GM12878 (cell line): ENCODE measurements at regions of chr5 and their contacts with region 1.

Region 1: DNA sequence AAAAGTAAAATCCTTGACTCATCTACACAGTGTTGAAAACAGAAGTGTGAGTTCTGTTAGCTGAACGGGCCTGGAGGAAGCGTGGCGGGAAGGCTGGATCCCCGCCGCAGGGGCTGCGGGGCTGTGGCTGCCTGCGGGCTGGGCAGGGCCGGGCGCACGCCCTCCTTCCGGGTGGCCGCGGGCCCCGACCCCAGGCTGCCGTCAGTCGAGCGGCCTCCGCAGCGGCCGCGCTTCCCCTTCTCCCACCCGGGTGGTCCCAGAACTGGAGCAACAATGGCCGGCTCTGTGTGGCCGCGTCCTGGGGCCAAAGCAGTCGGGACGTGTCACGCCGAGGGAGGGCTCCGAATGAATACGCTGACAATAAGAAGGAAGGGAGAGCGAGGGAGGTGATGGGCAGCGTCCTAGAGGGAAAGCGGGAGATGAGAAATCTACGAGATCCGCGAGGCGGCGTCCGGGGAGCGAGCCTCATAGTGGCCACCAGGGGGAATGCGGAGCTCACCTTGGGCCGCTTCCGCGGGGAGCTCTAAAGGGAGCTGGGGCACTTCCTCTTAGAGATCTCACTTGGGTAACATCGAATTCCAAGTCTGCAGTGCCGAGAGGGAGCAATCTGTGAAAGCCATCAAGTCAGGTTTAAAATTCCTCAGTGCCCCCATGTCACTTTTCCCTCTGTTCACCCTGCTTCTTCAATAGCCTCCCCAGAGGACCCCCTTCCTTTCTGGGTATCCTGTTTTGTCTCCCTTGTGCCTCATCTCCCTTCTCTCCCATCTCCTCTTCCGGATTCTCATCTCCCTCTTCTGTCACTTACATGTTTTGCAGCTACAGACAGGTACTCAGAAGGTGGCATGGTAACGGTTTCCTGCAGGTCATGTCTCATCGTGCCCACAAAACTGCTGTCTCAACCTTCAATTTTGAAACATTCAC is 83.9 kb downstream of the SLC1A3 start:
- DNase-seq: peak; percentile 42
- ATAC-seq: peak; percentile 84
- H3K4me3 ChIP-seq: peak overlapping the region; percentile 83
- H3K27ac ChIP-seq: peak overlapping the region; percentile 55
- H3K4me1 ChIP-seq: peaks cover 19% of the 10 kb centered on the region
- H3K27me3 ChIP-seq: no peaks in the 10 kb centered on the region
- CTCF ChIP-seq: peak; percentile 89 to 95 (median 90)
- EP300 ChIP-seq: no peak
- POLR2A ChIP-seq: peak; percentile 68
- RAD21 ChIP-seq: peak; percentile 53

Region 2: GRCh38 chr5:35598707-35599370 is 1091.5 kb before region 1 on chr5:
- CTCF ChIA-PET with region 1: no interaction called
- POLR2A ChIA-PET with region 1: no interaction called
- RAD21 ChIA-PET with region 1: no interaction called
- SMC1A ChIA-PET with region 1: no interaction called
- in situ Hi-C with region 1: no loop called
- intact Hi-C with region 1: no loop called
- DNase-seq: no peak
- ATAC-seq: peak; percentile 87
- H3K4me3 ChIP-seq: no peak overlapping the region
- H3K27ac ChIP-seq: no peak overlapping the region
- H3K4me1 ChIP-seq: no peaks in the 10 kb centered on the region
- H3K27me3 ChIP-seq: no peaks in the 10 kb centered on the region
- CTCF ChIP-seq: peak in 2 of 3 experiments; percentile 21 to 41; a peak in 2 of 6 replicates
- EP300 ChIP-seq: no peak
- POLR2A ChIP-seq: no peak
- RAD21 ChIP-seq: peak; percentile 29; the same call in 1 of the 2 replicates

Region 3: GRCh38 chr5:36177715-36178523 is 512.4 kb before region 1 on chr5:
- CTCF ChIA-PET with region 1: interaction called, 5 read pairs
- POLR2A ChIA-PET with region 1: no interaction called
- RAD21 ChIA-PET with region 1: interaction called, 3 read pairs
- SMC1A ChIA-PET with region 1: interaction called, 3 read pairs
- in situ Hi-C with region 1: loop called (anchors 10 kb)
- intact Hi-C with region 1: loop called (anchors 2 kb)
- DNase-seq: no peak
- ATAC-seq: peak; percentile 79
- H3K4me3 ChIP-seq: peak overlapping the region; percentile 1; the same call in 1 of the 2 replicates
- H3K27ac ChIP-seq: peak overlapping the region; percentile 50; the same call in 1 of the 2 replicates
- H3K4me1 ChIP-seq: peaks cover 14% of the 10 kb centered on the region
- H3K27me3 ChIP-seq: no peaks in the 10 kb centered on the region
- CTCF ChIP-seq: peak; percentile 13 to 37 (median 37); a peak in 4 of 6 replicates
- EP300 ChIP-seq: no peak
- POLR2A ChIP-seq: no peak
- RAD21 ChIP-seq: peak; percentile 54

Region 4: DNA sequence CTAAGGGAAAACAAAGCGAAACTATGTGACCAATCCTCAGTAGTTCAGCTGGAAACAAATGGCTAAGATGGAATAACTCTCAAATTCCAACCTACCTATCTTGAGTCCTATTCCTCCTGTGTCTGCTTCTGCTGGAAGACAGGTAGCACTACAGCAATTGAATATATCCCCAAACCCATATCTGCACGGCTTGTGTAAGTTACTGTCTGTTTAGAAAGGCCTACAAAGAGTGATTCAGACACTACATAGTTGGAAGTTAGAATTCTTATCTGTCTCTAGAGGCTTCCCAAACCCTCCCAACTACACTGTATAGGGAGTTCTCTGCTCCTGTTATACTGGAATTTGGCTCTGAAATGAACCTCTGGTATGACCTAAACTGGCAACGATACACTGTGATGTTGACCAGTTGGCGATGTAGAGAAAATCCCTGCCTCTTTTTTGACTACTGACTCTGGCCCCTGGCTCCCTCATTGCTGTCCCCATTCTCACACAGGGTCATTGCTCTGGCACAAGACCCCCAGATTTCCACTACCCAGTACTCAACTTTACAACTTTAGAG is 426.0 kb before region 1 on chr5:
- CTCF ChIA-PET with region 1: interaction called, 14 read pairs
- POLR2A ChIA-PET with region 1: no interaction called
- RAD21 ChIA-PET with region 1: interaction called, 5 read pairs
- SMC1A ChIA-PET with region 1: interaction called, 6 read pairs
- in situ Hi-C with region 1: no loop called
- intact Hi-C with region 1: loop called (anchors 1 kb)
- DNase-seq: no peak
- ATAC-seq: no peak
- H3K4me3 ChIP-seq: no peak overlapping the region
- H3K27ac ChIP-seq: no peak overlapping the region
- H3K4me1 ChIP-seq: no peaks in the 10 kb centered on the region
- H3K27me3 ChIP-seq: no peaks in the 10 kb centered on the region
- CTCF ChIP-seq: no peak
- EP300 ChIP-seq: no peak
- POLR2A ChIP-seq: no peak
- RAD21 ChIP-seq: no peak

Region 5: GRCh38 chr5:36507332-36507952 is 182.9 kb before region 1 on chr5:
- CTCF ChIA-PET with region 1: interaction called, 44 read pairs
- POLR2A ChIA-PET with region 1: no interaction called
- RAD21 ChIA-PET with region 1: interaction called, 6 read pairs
- SMC1A ChIA-PET with region 1: interaction called, 10 read pairs
- in situ Hi-C with region 1: no loop called
- intact Hi-C with region 1: loop called (anchors 1 kb)
- DNase-seq: peak; percentile 3
- ATAC-seq: peak; percentile 90
- H3K4me3 ChIP-seq: no peak overlapping the region
- H3K27ac ChIP-seq: no peak overlapping the region
- H3K4me1 ChIP-seq: no peaks in the 10 kb centered on the region
- H3K27me3 ChIP-seq: no peaks in the 10 kb centered on the region
- CTCF ChIP-seq: peak; percentile 69 to 77 (median 71)
- EP300 ChIP-seq: no peak
- POLR2A ChIP-seq: no peak
- RAD21 ChIP-seq: peak; percentile 80

Region 6: GRCh38 chr5:36602711-36603321 is 87.5 kb before region 1 on chr5:
- CTCF ChIA-PET with region 1: no interaction called
- POLR2A ChIA-PET with region 1: no interaction called
- RAD21 ChIA-PET with region 1: no interaction called
- SMC1A ChIA-PET with region 1: no interaction called
- in situ Hi-C with region 1: no loop called
- intact Hi-C with region 1: loop called (anchors 2 kb)
- DNase-seq: no peak
- ATAC-seq: peak; percentile 44
- H3K4me3 ChIP-seq: no peak overlapping the region
- H3K27ac ChIP-seq: no peak overlapping the region
- H3K4me1 ChIP-seq: no peaks in the 10 kb centered on the region
- H3K27me3 ChIP-seq: no peaks in the 10 kb centered on the region
- CTCF ChIP-seq: peak; percentile 18 to 32 (median 20); a peak in 3 of 6 replicates
- EP300 ChIP-seq: no peak
- POLR2A ChIP-seq: no peak
- RAD21 ChIP-seq: peak; percentile 53; the same call in 1 of the 2 replicates

Region 7: DNA sequence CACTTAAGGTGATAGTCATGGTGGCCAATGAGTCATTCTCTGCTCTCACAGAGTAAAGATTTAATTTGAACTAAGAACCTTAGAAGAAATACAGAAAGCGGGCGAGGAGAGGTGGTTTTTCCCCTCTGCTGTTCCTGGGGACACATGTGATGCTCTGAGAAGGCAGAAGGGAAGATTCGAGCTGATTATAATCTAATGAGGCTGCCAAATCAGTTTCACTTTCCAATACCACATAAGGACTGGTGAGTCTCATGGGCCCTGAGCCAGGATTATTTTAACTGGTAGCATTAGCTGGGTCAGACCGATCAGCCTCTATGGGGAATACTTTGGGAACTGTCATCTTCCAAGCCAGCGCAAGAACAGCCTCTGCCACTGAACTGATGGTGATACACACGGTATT is 32.6 kb after region 1 on chr5:
- CTCF ChIA-PET with region 1: interaction called, 202 read pairs
- POLR2A ChIA-PET with region 1: interaction called, 18 read pairs
- RAD21 ChIA-PET with region 1: interaction called, 30 read pairs
- SMC1A ChIA-PET with region 1: interaction called, 176 read pairs
- in situ Hi-C with region 1: no loop called
- intact Hi-C with region 1: loop called (anchors 2 kb)
- DNase-seq: peak; percentile 86
- ATAC-seq: peak; percentile 59
- H3K4me3 ChIP-seq: peak overlapping the region; percentile 60
- H3K27ac ChIP-seq: peak overlapping the region; percentile 96
- H3K4me1 ChIP-seq: peaks cover 54% of the 10 kb centered on the region
- H3K27me3 ChIP-seq: no peaks in the 10 kb centered on the region
- CTCF ChIP-seq: no peak
- EP300 ChIP-seq: no peak
- POLR2A ChIP-seq: no peak
- RAD21 ChIP-seq: no peak

Region 8: GRCh38 chr5:36801521-36801920 is 111.2 kb after region 1 on chr5:
- CTCF ChIA-PET with region 1: no interaction called
- POLR2A ChIA-PET with region 1: no interaction called
- RAD21 ChIA-PET with region 1: no interaction called
- SMC1A ChIA-PET with region 1: no interaction called
- in situ Hi-C with region 1: no loop called
- intact Hi-C with region 1: no loop called
- DNase-seq: no peak
- ATAC-seq: no peak
- H3K4me3 ChIP-seq: no peak overlapping the region
- H3K27ac ChIP-seq: no peak overlapping the region
- H3K4me1 ChIP-seq: no peaks in the 10 kb centered on the region
- H3K27me3 ChIP-seq: no peaks in the 10 kb centered on the region
- CTCF ChIP-seq: no peak
- EP300 ChIP-seq: no peak
- POLR2A ChIP-seq: no peak
- RAD21 ChIP-seq: no peak